ENCODE measurements at regions of chr17 and their contacts with region 1.

Region 1: DNA sequence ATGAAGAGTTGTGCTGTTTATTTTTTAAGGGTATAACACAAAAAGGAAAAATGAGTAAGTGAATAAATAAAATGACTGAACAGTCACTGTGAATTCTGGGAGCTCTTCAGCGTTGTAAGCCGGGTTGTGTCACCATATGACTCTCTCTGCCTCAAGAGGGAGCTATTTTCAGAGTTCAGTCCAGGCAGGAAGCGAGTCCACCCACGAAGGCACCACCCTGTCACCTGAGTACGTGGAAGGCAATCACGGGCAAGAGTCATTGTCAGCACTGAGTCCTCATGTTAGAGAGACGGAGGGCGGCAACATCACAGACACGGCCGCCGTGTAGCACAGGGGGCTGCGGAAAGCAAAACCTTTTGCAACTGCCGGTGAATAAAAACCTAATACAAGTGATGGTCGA is 227.6 kb downstream of the UTP18 start:
- DNase-seq: peak; percentile 33
- ATAC-seq: peak; percentile 90
- H3K4me3 Mint-ChIP-seq: peak overlapping the region; percentile 32
- H3K27ac Mint-ChIP-seq: no peak overlapping the region
- H3K4me1 Mint-ChIP-seq: peaks cover 5% of the 10 kb centered on the region
- H3K27me3 Mint-ChIP-seq: no peaks in the 10 kb centered on the region; the same call in 1 of the 2 replicates
- CTCF ChIP-seq: no peak

Region 2: GRCh38 chr17:51435641-51436091 is 52.3 kb before region 1 on chr17:
- CTCF ChIA-PET with region 1: interaction called, 15 read pairs
- POLR2A ChIA-PET with region 1: no interaction called
- DNase-seq: peak; percentile 79
- ATAC-seq: peak; percentile 97
- H3K4me3 Mint-ChIP-seq: no peak overlapping the region
- H3K27ac Mint-ChIP-seq: no peak overlapping the region
- H3K4me1 Mint-ChIP-seq: peaks cover 15% of the 10 kb centered on the region
- H3K27me3 Mint-ChIP-seq: no peaks in the 10 kb centered on the region
- CTCF ChIP-seq: peak; percentile 38; the same call in 1 of the 2 replicates

Region 3: DNA sequence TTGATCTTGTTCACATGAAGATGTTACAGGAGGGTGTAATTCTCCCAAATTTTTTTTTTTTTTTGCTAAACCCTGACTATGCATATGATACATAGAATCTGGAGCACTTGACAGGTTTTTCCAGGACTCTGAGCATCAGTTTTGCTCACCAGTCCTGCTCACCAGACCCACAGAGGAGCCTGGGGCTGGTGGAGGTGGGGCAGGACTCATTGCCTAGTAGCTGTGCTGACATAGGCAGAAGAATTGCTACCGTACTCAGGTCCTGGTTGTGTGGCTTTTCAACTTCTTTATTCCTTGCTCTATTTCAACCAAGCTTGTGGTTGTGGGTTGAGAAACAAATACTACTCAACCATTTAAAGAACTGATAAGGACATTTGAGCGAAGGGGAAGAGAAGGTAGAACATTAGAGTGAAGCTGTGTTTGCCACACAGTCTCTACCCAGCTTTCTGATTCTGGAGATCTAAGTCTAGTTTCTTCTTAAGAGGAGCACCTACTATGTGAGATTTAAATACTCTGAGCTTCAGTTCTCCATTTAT is 15.2 kb before region 1 on chr17:
- CTCF ChIA-PET with region 1: interaction called, 10 read pairs
- POLR2A ChIA-PET with region 1: no interaction called
- DNase-seq: no peak
- ATAC-seq: no peak
- H3K4me3 Mint-ChIP-seq: no peak overlapping the region
- H3K27ac Mint-ChIP-seq: no peak overlapping the region
- H3K4me1 Mint-ChIP-seq: peaks cover 14% of the 10 kb centered on the region
- H3K27me3 Mint-ChIP-seq: no peaks in the 10 kb centered on the region
- CTCF ChIP-seq: no peak

Region 4: DNA sequence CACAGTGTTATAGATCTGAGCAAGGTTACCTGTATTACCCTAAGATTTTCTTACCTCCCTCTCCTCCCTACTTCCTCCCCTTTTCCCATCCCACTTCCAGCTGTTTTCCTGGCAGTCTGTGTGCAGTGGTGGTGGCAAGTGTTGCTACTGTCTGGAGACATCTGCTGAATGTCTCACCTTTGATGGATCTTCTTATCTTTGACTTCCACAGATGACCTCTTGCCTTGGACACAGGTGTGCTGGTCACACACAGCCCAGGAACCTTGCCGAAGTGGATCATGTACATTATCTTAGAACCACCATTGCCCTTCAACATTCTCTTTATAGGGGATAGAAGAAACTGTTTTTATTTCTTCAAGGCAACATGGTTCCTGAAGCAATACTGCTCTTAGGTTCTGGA is 17.5 kb after region 1 on chr17:
- CTCF ChIA-PET with region 1: interaction called, 17 read pairs
- POLR2A ChIA-PET with region 1: no interaction called
- DNase-seq: no peak
- ATAC-seq: no peak
- H3K4me3 Mint-ChIP-seq: no peak overlapping the region
- H3K27ac Mint-ChIP-seq: no peak overlapping the region
- H3K4me1 Mint-ChIP-seq: no peaks in the 10 kb centered on the region
- H3K27me3 Mint-ChIP-seq: peaks cover 3% of the 10 kb centered on the region
- CTCF ChIP-seq: no peak

Region 5: GRCh38 chr17:51540151-51540550 is 52.2 kb after region 1 on chr17:
- CTCF ChIA-PET with region 1: interaction called, 15 read pairs
- POLR2A ChIA-PET with region 1: no interaction called
- DNase-seq: no peak
- ATAC-seq: no peak
- H3K4me3 Mint-ChIP-seq: no peak overlapping the region
- H3K27ac Mint-ChIP-seq: no peak overlapping the region
- H3K4me1 Mint-ChIP-seq: peaks cover 4% of the 10 kb centered on the region; the same call in 1 of the 2 replicates
- H3K27me3 Mint-ChIP-seq: no peaks in the 10 kb centered on the region
- CTCF ChIP-seq: no peak

Measured in WTC11 (cell line).